Endothelial cell of umbilical vein (primary cell): ENCODE measurements at regions of chr6 and their contacts with region 1.

Region 1: GRCh38 chr6:142155895-142156757 is 9.1 kb downstream of the VTA1 start:
- DNase-seq: peak; percentile 76
- H3K4me3 ChIP-seq: peak overlapping the region in 1 of 3 experiments; percentile 13
- H3K27ac ChIP-seq: peak overlapping the region; percentile 74
- H3K4me1 ChIP-seq: peaks cover 38% of the 10 kb centered on the region
- H3K27me3 ChIP-seq: no peaks in the 10 kb centered on the region
- CTCF ChIP-seq: peak; percentile 7 to 24
- POLR2A ChIP-seq: no peak

Region 2: DNA sequence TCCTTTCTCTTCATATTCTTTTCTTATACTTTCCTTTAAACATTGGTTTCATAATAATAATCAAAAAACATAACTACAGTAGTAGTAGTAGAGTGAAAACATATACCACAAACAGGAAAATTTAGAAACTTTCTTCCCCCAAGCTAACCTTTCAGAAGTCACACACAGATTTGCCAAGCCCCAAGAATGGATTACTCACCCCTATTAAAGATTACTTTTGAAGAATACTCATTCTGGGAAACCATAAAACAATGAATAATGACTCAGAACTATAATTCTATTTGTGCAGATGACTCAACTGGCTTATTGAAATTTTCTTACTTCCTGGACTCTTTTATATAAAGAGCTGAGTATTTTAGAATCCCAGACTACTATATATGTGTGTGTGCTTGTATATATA is 142.8 kb before region 1 on chr6:
- CTCF ChIA-PET with region 1: no interaction called
- POLR2A ChIA-PET with region 1: no interaction called
- dilution Hi-C with region 1: no loop called
- intact Hi-C with region 1: no loop called
- DNase-seq: peak; percentile 82
- H3K4me3 ChIP-seq: no peak overlapping the region
- H3K27ac ChIP-seq: peak overlapping the region; percentile 43
- H3K4me1 ChIP-seq: peaks cover 43% of the 10 kb centered on the region
- H3K27me3 ChIP-seq: no peaks in the 10 kb centered on the region
- CTCF ChIP-seq: no peak
- POLR2A ChIP-seq: no peak

Region 3: GRCh38 chr6:142075516-142076101 is 80.5 kb before region 1 on chr6:
- CTCF ChIA-PET with region 1: no interaction called
- POLR2A ChIA-PET with region 1: no interaction called
- dilution Hi-C with region 1: no loop called
- intact Hi-C with region 1: no loop called
- DNase-seq: no peak
- H3K4me3 ChIP-seq: no peak overlapping the region
- H3K27ac ChIP-seq: no peak overlapping the region
- H3K4me1 ChIP-seq: no peaks in the 10 kb centered on the region
- H3K27me3 ChIP-seq: no peaks in the 10 kb centered on the region
- CTCF ChIP-seq: no peak
- POLR2A ChIP-seq: no peak

Region 4: GRCh38 chr6:142177201-142177600 is 21.1 kb after region 1 on chr6:
- CTCF ChIA-PET with region 1: interaction called, 12 read pairs
- POLR2A ChIA-PET with region 1: no interaction called
- dilution Hi-C with region 1: no loop called
- intact Hi-C with region 1: no loop called
- DNase-seq: no peak
- H3K4me3 ChIP-seq: no peak overlapping the region
- H3K27ac ChIP-seq: no peak overlapping the region
- H3K4me1 ChIP-seq: no peaks in the 10 kb centered on the region
- H3K27me3 ChIP-seq: no peaks in the 10 kb centered on the region
- CTCF ChIP-seq: no peak
- POLR2A ChIP-seq: no peak

Region 5: DNA sequence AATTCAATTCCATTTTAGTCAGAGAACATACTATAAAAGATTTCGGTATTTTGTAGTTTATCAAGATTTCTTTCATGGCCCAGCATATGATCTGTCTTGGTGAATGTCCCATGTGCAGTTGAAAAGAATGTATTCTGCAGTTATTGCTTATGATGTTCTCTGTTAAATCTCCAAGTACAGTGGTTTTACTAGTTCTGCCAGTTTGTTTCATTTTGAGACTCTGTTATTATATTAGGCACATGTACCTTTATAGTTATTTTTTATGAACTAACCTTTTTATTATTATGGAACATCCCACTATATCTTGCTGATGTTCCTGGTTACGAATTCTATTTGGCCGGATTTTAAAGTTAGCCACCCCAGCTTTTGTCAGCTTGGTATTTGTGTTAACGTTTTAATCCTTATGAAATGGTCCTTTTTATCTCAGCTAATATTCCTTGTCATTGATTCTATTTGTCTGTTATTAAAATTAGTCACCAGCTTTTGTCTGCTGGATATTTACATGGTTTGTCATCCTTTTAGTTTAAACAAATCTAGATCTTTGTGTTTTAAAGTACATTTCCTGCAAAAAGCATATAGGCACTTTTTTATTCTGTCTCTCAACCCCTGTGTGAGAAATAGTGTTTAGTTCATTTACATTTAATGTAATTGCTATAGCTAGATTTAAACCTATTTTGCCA is 39.9 kb after region 1 on chr6:
- CTCF ChIA-PET with region 1: interaction called, 22 read pairs
- POLR2A ChIA-PET with region 1: no interaction called
- dilution Hi-C with region 1: no loop called
- intact Hi-C with region 1: no loop called
- DNase-seq: peak; percentile 28
- H3K4me3 ChIP-seq: peak overlapping the region in 1 of 3 experiments; percentile 11
- H3K27ac ChIP-seq: peak overlapping the region; percentile 59
- H3K4me1 ChIP-seq: peaks cover 37% of the 10 kb centered on the region
- H3K27me3 ChIP-seq: no peaks in the 10 kb centered on the region
- CTCF ChIP-seq: no peak
- POLR2A ChIP-seq: no peak

Region 6: GRCh38 chr6:142207265-142207877 is 51.2 kb after region 1 on chr6:
- CTCF ChIA-PET with region 1: interaction called, 173 read pairs
- POLR2A ChIA-PET with region 1: no interaction called
- dilution Hi-C with region 1: no loop called
- intact Hi-C with region 1: loop called (anchors 1 kb)
- DNase-seq: peak; percentile 71
- H3K4me3 ChIP-seq: no peak overlapping the region
- H3K27ac ChIP-seq: no peak overlapping the region
- H3K4me1 ChIP-seq: peaks cover 14% of the 10 kb centered on the region
- H3K27me3 ChIP-seq: no peaks in the 10 kb centered on the region
- CTCF ChIP-seq: peak; percentile 73
- POLR2A ChIP-seq: no peak

Region 7: DNA sequence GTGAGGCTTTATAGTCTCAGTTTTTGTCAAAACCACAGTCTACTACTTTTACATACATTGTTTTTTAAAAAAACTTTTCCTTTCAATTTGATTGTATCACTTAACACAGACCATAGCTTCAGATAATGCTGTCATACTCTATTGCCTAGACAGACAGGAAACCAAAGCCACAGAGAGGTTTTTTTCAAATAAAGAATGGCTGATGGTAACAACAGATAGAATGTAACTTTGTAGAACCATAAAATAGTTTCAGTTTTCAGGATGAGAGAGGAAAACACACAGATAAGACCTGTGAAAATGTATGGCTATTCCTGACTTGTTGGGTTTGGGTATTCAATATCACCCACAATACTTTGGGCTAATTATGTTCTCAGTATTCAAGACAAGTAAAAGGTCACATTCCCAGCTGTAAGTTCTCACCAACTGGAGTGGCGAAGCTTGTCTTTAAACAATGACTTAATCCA is 239.7 kb after region 1 on chr6:
- CTCF ChIA-PET with region 1: interaction called, 14 read pairs
- POLR2A ChIA-PET with region 1: no interaction called
- dilution Hi-C with region 1: no loop called
- intact Hi-C with region 1: no loop called
- DNase-seq: peak; percentile 94
- H3K4me3 ChIP-seq: no peak overlapping the region
- H3K27ac ChIP-seq: peak overlapping the region; percentile 99
- H3K4me1 ChIP-seq: peaks cover 47% of the 10 kb centered on the region
- H3K27me3 ChIP-seq: no peaks in the 10 kb centered on the region
- CTCF ChIP-seq: no peak
- POLR2A ChIP-seq: no peak

Region 8: DNA sequence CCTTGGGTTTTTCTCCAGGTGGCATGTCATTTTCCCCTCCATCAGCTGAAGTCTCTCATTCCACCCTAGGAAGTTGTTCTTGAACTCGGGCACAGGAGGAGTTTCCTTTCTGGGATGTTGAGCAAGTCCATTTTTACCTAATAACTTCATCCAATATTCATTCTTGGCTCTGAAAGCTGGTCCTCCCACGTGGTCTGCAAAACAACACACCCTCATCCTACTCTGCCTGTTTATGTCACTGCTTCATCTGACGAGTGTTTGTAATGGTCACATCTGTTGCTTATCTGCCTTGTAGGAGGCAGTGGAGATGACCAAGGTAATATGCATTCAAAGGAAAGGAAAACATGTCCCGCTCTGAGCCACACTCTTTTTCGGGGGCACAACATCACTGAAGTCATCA is 862.8 kb after region 1 on chr6:
- CTCF ChIA-PET with region 1: no interaction called
- POLR2A ChIA-PET with region 1: no interaction called
- dilution Hi-C with region 1: no loop called
- intact Hi-C with region 1: no loop called
- DNase-seq: no peak
- H3K4me3 ChIP-seq: no peak overlapping the region
- H3K27ac ChIP-seq: no peak overlapping the region
- H3K4me1 ChIP-seq: no peaks in the 10 kb centered on the region
- H3K27me3 ChIP-seq: no peaks in the 10 kb centered on the region
- CTCF ChIP-seq: no peak
- POLR2A ChIP-seq: no peak